Endothelial cell of umbilical vein (primary cell): ENCODE measurements at regions of chr11 and their contacts with region 1.

Region 1: DNA sequence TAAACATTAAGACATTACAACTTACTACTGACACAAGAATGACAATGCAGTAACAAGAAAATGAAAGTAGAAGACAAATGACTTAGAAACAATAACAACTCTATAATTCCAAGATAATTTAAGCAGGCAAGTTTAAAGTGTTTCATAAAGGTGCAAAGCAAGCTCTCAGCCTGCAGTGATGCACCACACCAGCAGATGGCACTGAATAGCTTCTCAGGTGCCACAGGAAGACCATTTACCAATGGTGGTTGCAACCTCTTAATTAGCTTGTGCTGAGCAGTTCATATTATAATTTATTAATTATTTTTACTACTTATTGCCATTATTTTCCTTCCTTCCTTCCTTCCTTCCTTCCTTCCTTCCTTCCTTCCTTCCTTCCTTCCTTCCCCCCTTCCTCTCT is 60.6 kb downstream of the NXPE2 start:
- DNase-seq: peak; percentile 50
- H3K4me3 ChIP-seq: no peak overlapping the region
- H3K27ac ChIP-seq: no peak overlapping the region
- H3K4me1 ChIP-seq: no peaks in the 10 kb centered on the region
- H3K27me3 ChIP-seq: peaks cover 0 to 2% of the 10 kb centered on the region in 2 experiments
- CTCF ChIP-seq: peak; percentile 57 to 78
- POLR2A ChIP-seq: no peak

Region 2: GRCh38 chr11:114724916-114725524 is 13.9 kb before region 1 on chr11:
- CTCF ChIA-PET with region 1: interaction called, 11 read pairs
- POLR2A ChIA-PET with region 1: no interaction called
- dilution Hi-C with region 1: no loop called
- intact Hi-C with region 1: no loop called
- DNase-seq: no peak
- H3K4me3 ChIP-seq: no peak overlapping the region
- H3K27ac ChIP-seq: no peak overlapping the region
- H3K4me1 ChIP-seq: no peaks in the 10 kb centered on the region
- H3K27me3 ChIP-seq: no peaks in the 10 kb centered on the region
- CTCF ChIP-seq: no peak
- POLR2A ChIP-seq: no peak

Region 3: DNA sequence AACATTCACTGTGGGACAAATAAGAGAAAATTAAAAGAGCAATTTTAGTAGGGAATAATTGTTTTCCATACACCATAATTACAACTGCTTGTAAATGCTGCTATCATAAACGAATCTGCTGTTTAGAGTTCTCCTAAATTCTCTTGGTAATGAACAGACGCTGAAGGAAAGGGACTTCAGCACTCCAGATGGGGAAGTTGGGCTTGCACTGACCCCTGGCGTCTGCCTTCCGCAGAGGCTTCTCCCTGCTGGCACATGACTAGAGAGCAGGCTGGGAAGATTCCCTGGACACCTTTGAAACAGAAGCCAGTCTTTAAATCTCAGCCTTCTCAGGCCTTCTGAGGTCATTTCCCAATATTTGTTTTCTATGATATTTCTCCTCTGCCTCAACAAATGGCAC is 23.5 kb after region 1 on chr11:
- CTCF ChIA-PET with region 1: interaction called, 11 read pairs
- POLR2A ChIA-PET with region 1: no interaction called
- dilution Hi-C with region 1: no loop called
- intact Hi-C with region 1: loop called (anchors 1 kb)
- DNase-seq: peak; percentile 47
- H3K4me3 ChIP-seq: no peak overlapping the region
- H3K27ac ChIP-seq: no peak overlapping the region
- H3K4me1 ChIP-seq: no peaks in the 10 kb centered on the region
- H3K27me3 ChIP-seq: no peaks in the 10 kb centered on the region
- CTCF ChIP-seq: peak; percentile 51 to 75
- POLR2A ChIP-seq: no peak

Region 4: GRCh38 chr11:114953039-114953438 is 214.1 kb after region 1 on chr11:
- CTCF ChIA-PET with region 1: no interaction called
- POLR2A ChIA-PET with region 1: no interaction called
- dilution Hi-C with region 1: no loop called
- intact Hi-C with region 1: no loop called
- DNase-seq: no peak
- H3K4me3 ChIP-seq: no peak overlapping the region
- H3K27ac ChIP-seq: no peak overlapping the region
- H3K4me1 ChIP-seq: no peaks in the 10 kb centered on the region
- H3K27me3 ChIP-seq: no peaks in the 10 kb centered on the region
- CTCF ChIP-seq: no peak
- POLR2A ChIP-seq: no peak

Region 5: GRCh38 chr11:116224154-116224888 is 1485.4 kb after region 1 on chr11:
- CTCF ChIA-PET with region 1: interaction called, 6 read pairs
- POLR2A ChIA-PET with region 1: no interaction called
- dilution Hi-C with region 1: no loop called
- intact Hi-C with region 1: loop called (anchors 1 kb)
- DNase-seq: peak; percentile 34
- H3K4me3 ChIP-seq: no peak overlapping the region
- H3K27ac ChIP-seq: no peak overlapping the region
- H3K4me1 ChIP-seq: no peaks in the 10 kb centered on the region
- H3K27me3 ChIP-seq: no peaks in the 10 kb centered on the region
- CTCF ChIP-seq: peak; percentile 58 to 69
- POLR2A ChIP-seq: no peak